ENCODE measurements at regions of chr19 and their contacts with region 1.

Region 1: GRCh38 chr19:15439078-15439799 is 10.5 kb downstream of the WIZ start:
- DNase-seq: no peak
- ATAC-seq: no peak

Region 2: DNA sequence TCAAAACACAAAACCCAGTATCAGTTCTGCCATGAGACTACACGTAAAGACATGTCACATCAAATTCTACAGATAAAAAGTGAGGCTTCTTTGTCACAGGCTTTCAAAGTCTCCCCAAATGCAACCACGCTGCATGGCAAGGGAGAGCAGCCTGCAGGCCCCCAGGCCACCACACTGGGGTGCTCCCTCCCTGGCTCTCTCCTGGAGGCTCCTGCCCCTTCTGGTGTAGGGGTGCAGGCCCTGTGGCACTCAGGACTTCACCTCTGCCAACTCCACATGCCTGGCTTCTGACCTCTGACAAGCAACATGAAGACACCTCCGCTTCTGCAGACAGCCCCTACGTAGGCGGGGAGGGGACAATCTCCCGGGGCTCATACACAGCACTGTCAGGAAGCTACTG is 74.0 kb before region 1 on chr19:
- intact Hi-C with region 1: no loop called
- DNase-seq: no peak
- ATAC-seq: peak; percentile 11

Region 3: GRCh38 chr19:15404097-15404779 is 35.0 kb before region 1 on chr19:
- intact Hi-C with region 1: loop called (anchors 1 kb)
- DNase-seq: peak; percentile 39
- ATAC-seq: peak; percentile 69

Region 4: DNA sequence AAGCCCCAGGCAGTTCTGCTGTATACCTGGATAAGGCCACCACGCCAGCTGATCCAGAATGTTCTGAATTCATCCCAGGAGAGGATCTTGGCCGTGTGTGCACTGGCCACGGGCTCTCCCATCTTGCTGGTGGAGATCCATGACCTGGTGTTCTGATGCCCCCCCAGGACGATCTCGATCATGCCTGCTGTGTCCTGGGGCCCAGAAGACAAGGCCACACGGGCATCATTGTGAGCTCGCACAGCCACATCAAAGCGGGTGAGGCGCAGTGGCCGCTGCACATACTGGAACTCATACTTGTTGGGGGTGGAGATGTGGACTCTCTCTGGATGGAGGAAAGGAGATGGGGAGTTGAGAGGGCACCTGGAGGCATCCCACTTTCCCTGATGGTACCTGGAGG is 1489.7 kb after region 1 on chr19:
- intact Hi-C with region 1: no loop called
- DNase-seq: no peak
- ATAC-seq: no peak